ENCODE measurements at regions of chr5 and their contacts with region 1.

Region 1: GRCh38 chr5:25539536-25539935 is 894.8 kb upstream of the CDH10 start:
- DNase-seq: no peak
- H3K4me3 ChIP-seq: no peak overlapping the region
- H3K27ac ChIP-seq: no peak overlapping the region
- H3K4me1 ChIP-seq: no peaks in the 10 kb centered on the region
- H3K27me3 ChIP-seq: no peaks in the 10 kb centered on the region
- CTCF ChIP-seq: no peak
- EP300 ChIP-seq: no peak
- POLR2A ChIP-seq: no peak

Region 2: GRCh38 chr5:25568979-25569625 is 29.6 kb after region 1 on chr5:
- in situ Hi-C with region 1: no loop called
- intact Hi-C with region 1: loop called (anchors 1 kb)
- DNase-seq: no peak
- H3K4me3 ChIP-seq: no peak overlapping the region
- H3K27ac ChIP-seq: no peak overlapping the region
- H3K4me1 ChIP-seq: no peaks in the 10 kb centered on the region
- H3K27me3 ChIP-seq: no peaks in the 10 kb centered on the region
- CTCF ChIP-seq: no peak
- EP300 ChIP-seq: no peak
- POLR2A ChIP-seq: no peak